Head of caudate nucleus (tissue), 42 donors: ENCODE measurements at regions of chr5 and their contacts with region 1.

Region 1: DNA sequence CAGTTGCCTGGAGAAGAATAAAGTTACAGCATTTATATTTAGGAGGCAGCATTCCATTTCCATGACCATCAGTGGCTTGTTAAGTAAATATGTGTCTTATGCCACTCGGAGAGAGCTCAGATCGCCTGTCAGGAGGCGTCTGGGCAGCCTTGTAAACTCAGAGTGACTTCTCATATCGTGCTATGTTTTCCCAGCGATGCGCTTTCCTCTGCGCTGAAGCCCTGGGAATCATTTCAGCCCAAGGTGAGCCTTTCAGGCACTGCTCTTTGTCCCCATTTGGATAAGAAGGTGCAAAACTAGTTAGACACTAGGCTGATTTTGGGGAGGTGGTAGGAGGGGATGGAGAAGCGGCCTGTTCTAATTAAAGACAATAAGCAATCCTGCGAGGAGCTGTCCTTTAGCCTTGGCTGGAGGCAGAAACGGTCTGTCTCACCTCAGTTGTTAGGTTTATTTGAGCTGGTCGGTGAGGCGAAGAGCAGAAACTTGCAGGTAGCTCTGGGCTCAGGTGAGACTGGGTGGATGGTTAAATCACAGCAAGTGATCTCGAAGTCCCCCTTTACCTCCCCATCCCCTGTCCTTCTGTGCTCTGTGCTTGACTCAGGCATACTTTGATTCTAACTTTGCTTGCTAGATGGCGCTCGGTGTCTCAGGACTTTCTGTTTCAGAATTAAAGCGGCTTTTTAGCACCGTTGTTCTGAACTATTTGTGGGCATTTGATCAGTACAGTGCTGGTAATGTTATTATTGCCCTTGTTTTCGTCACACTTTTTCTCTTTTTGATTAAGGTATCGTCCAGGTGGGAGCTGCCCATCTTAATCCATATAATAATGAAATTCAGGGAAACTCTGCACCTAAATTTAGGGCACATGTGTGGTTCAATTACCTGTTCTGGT is 24.6 kb downstream of the NR2F1 start:
- DNase-seq: peak in 21 of 42 donors; percentile 39 to 80 (median 60)

Region 2: GRCh38 chr5:93219641-93220145 is 387.9 kb before region 1 on chr5:
- intact Hi-C with region 1: no loop called
- DNase-seq: no peak

Region 3: DNA sequence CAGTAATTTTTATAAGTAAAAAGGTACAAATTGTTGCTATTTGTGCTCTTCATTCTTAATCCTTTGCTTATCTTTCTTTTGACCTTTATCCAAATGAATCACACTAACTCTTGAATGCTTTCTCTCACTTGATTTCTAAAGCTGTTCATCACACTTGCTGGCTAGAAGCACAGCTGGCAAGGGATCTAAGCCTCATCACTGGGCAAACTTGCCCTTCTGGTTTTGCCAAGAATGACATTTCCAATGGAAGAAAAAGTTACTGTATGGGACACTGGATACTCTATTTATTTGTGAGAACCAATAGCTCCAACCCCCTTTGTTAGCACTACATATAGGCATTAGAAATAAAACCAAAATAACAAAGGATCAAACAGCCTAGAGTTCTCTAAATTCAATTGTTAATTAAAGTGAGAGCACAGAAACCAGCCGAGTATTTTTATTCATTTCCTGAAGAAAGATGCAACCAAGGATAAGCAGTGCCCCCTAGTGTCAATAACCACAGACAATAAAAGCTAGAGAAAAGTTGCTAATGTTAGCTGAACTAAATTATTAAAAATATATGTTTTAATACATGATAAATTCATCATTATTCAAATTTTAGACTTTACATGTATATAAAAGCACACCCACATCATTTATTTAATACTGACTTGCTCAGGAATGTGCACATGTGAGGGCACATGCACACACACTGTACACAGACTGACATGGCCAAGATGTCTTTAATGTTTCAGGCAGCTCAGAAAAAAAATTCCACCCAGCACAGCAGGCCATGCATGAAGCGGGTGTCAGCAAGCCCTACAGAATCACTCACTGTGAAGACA is 193.6 kb after region 1 on chr5:
- intact Hi-C with region 1: loop called (anchors 5 kb)
- DNase-seq: peak in 18 of 42 donors; percentile 5 to 76 (median 42)

Region 4: GRCh38 chr5:93915142-93915553 is 307.5 kb after region 1 on chr5:
- intact Hi-C with region 1: loop called (anchors 10 kb)
- DNase-seq: no peak